ENCODE measurements at regions of chr1 and their contacts with region 1.

Region 1: GRCh38 chr1:207885129-207886032 is 25.5 kb downstream of the CD34 start:
- DNase-seq: peak; percentile 76
- H3K4me3 Mint-ChIP-seq: no peak overlapping the region
- H3K27ac Mint-ChIP-seq: peak overlapping the region; percentile 98
- H3K4me1 Mint-ChIP-seq: peaks cover 40% of the 10 kb centered on the region
- H3K27me3 Mint-ChIP-seq: peaks cover 2% of the 10 kb centered on the region

Region 2: DNA sequence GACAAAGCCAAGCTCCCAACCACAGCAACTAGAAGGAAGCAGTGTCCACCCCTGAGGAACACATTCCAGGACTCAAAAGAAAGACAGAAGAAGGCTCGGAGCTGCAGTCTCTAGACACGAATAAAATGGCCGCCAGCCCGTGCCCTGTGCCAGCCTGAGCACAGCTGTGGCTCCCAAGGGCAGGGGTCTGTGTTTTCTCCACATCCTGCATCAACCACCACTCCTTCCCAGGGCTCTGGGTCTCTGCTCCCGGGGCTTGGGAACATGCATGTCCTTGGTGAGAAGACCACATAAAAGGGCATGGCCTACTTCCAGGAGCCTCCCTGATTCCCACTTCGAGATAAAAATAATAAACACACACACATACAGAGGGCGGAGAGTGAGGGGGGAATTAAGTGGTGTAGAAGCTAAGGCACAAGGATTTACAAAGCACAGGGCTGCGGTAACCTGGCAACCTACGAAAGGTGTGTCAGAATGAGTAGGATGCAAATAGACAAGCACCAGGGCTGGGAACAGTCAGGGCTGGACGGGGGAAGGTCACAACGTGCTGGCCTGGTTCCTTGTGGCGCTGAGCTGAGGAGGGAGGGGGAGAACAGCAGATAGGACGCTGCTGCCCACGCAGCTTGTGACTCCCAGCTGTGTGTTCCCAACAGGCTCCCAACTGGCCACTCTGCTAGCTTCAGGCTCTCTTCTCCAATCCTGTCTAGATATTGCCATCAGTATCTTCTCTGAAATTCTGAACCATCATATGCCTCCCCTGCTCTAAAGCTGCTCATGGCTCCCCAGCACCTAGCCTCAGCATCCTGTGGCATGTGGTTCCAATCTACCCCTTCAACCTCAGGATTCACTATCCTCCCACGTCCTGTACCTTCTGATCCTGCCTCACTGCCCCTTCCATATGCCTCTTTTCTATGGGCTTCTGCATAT is 47.0 kb before region 1 on chr1:
- CTCF ChIA-PET with region 1: interaction called, 24 read pairs
- POLR2A ChIA-PET with region 1: no interaction called
- DNase-seq: no peak
- H3K4me3 Mint-ChIP-seq: no peak overlapping the region
- H3K27ac Mint-ChIP-seq: peak overlapping the region; percentile 27
- H3K4me1 Mint-ChIP-seq: peaks cover 44% of the 10 kb centered on the region
- H3K27me3 Mint-ChIP-seq: no peaks in the 10 kb centered on the region

Region 3: DNA sequence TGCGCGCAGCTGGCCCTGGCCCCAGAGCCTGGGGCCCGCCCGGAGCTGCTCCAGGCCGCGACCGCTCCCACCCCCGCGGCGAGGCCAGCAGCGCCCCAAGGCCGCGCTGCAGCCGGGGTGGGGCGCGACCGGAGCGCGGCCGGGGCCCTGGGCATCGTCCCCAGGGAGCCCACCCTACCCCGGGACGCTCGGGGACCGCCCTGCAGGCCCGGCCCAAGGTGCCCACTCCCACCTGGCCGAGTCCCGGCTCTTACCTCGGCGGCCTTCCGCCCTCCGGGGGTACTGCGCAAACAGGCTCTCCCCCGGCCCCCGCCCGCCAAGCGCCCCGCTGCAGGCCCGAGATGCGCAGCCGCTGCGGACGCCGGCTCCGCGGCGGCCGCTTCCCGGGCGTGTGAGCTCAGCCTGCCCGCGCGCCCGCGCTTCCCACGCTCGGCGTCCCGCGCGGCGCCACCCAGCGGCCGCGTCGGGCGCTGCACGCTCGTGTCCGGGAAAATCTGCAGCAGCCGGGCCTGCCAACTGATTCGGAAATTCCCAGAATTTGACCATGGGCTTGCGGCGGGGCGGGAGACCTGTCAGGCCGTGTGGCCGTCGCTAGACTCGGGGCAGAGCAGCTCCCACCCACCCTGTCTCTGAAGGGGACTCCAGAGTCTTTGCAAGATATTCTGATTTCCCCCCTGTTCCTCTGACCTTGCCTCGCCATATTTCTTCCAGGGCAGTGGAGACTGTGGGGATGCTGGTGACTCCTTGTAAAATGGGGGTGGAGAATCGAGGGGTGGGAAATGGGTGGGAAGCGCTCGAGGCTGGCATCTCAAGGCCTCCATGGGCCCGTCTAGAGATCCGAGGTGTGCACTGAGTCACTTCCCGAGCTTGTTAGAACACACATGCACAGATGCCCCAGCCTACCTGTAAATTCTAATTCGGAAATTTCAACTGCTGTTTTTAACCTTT is 16.3 kb before region 1 on chr1:
- CTCF ChIA-PET with region 1: interaction called, 124 read pairs
- POLR2A ChIA-PET with region 1: interaction called, 3 read pairs
- DNase-seq: peak; percentile 57
- H3K4me3 Mint-ChIP-seq: peak overlapping the region; percentile 93
- H3K27ac Mint-ChIP-seq: peak overlapping the region; percentile 95
- H3K4me1 Mint-ChIP-seq: peaks cover 85% of the 10 kb centered on the region
- H3K27me3 Mint-ChIP-seq: no peaks in the 10 kb centered on the region

Region 4: GRCh38 chr1:207897188-207897587 is 11.8 kb after region 1 on chr1:
- CTCF ChIA-PET with region 1: interaction called, 18 read pairs
- POLR2A ChIA-PET with region 1: no interaction called
- DNase-seq: no peak
- H3K4me3 Mint-ChIP-seq: no peak overlapping the region
- H3K27ac Mint-ChIP-seq: no peak overlapping the region
- H3K4me1 Mint-ChIP-seq: peaks cover 14% of the 10 kb centered on the region
- H3K27me3 Mint-ChIP-seq: peaks cover 12% of the 10 kb centered on the region

Region 5: DNA sequence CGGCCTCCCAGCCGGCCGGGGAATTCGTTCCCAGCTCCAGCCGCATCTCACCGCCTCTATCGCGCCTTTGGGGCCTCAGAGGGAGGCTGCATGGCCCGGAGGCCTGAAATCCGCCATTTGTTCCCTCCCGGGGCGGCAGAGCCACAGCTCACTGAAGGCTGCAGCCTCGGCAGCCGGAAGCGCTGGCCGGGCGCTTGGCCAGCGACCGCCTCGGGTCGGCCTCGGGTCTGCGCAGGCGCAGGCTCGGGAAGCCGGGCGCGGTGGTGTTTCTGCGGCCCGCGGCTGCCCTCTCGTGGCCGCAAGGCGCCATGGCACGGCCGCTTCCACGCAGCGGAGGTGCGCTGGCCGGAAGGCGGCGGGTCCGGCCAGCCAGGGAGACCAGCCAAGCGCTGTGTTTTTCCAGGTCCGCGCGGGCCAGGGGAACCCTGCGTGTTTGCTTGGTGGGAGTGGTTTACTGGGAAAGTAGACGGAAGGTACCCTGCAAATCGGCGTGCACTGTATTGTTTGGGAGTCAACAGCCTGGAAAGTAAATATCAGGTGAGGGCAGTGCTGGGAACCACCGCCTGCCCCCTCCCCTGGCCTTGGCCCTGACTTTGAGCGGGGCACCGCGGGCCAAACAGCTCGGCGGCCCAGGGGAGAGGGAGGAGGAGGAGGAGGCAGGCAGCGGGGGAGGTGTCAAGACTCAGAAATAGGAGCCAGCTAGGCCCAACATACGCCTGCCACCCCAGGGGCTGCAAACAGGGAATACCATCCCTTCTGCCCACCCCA is 78.2 kb after region 1 on chr1:
- CTCF ChIA-PET with region 1: interaction called, 41 read pairs
- POLR2A ChIA-PET with region 1: no interaction called
- DNase-seq: peak; percentile 80
- H3K4me3 Mint-ChIP-seq: peak overlapping the region; percentile 66
- H3K27ac Mint-ChIP-seq: peak overlapping the region; percentile 71
- H3K4me1 Mint-ChIP-seq: peaks cover 14% of the 10 kb centered on the region
- H3K27me3 Mint-ChIP-seq: peaks cover 40% of the 10 kb centered on the region

Measured in activated CD4-positive, alpha-beta T cell treated with anti-CD3 and anti-CD28 coated beads, Interleukin-2, amount 10 ng/mL, durations not matched to agents 7 days and 5 days (primary cell).